Esophagus muscularis mucosa (tissue), 4 donors: ENCODE measurements at regions of chr11 and their contacts with region 1.

Region 1: DNA sequence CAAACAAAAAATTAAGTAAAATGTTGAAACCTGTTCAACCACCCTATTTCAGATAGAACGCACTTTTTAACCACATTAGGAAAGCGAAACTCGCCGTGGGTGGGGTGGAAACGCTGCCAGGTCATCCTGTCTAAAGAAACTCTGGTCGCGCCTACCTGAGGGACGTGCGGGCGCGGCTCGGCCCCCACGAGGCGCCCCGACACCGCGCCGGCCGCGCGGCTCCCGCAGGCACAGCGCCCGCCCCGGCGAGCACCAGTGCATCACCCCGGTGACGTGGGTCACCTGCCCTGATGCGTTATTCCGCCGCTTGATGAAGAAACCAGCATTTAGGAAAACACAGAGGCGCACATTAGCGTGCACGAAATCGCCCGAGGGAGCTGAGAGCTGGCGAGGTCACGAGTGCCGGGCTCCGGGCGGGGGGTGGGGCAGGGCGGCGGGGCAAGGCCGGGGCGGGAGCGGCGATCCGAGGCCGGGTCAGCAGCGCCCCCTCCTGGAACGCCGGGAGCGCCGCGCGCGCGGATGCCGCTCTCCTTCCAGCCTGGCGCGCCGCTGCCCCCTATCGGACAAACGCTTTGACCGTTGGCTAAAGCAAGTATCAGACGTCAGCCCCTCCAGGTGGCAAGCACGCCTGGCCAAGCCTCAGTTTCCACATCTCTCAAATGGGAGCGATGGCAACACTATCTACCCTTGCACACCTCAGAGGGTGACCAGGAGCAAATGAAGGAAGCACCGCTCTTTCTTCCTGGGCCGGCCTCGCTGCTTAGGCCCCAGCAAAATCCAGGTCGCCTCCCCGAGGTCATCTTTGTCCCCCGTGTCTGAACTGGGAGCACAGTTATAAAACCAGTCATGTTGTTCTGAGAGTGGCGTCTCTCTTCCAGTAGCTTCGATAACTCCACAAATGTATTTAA is 15.7 kb upstream of the SNX32 start:
- DNase-seq: peak; percentile 96
- H3K4me3 ChIP-seq: peak overlapping the region; percentile 62 to 81 (median 68)
- H3K27ac ChIP-seq: peak overlapping the region; percentile 78 to 81 (median 80)
- H3K4me1 ChIP-seq: peaks cover 4 to 24% (median 15%) of the 10 kb centered on the region in 4 donors
- H3K27me3 ChIP-seq: no peaks in the 10 kb centered on the region
- CTCF ChIP-seq: peak in 2 of 3 experiments; percentile 98 to 100
- EP300 ChIP-seq: no peak
- POLR2A ChIP-seq: no peak

Region 2: GRCh38 chr11:65625628-65626342 is 192.3 kb before region 1 on chr11:
- intact Hi-C with region 1: loop called (anchors 10 kb)
- DNase-seq: no peak
- H3K4me3 ChIP-seq: no peak overlapping the region
- H3K27ac ChIP-seq: no peak overlapping the region
- H3K4me1 ChIP-seq: peaks cover 0 to 8% (median 4%) of the 10 kb centered on the region in 4 donors
- H3K27me3 ChIP-seq: no peaks in the 10 kb centered on the region
- CTCF ChIP-seq: peak; percentile 51 to 70 (median 62)
- EP300 ChIP-seq: no peak
- POLR2A ChIP-seq: no peak

Region 3: DNA sequence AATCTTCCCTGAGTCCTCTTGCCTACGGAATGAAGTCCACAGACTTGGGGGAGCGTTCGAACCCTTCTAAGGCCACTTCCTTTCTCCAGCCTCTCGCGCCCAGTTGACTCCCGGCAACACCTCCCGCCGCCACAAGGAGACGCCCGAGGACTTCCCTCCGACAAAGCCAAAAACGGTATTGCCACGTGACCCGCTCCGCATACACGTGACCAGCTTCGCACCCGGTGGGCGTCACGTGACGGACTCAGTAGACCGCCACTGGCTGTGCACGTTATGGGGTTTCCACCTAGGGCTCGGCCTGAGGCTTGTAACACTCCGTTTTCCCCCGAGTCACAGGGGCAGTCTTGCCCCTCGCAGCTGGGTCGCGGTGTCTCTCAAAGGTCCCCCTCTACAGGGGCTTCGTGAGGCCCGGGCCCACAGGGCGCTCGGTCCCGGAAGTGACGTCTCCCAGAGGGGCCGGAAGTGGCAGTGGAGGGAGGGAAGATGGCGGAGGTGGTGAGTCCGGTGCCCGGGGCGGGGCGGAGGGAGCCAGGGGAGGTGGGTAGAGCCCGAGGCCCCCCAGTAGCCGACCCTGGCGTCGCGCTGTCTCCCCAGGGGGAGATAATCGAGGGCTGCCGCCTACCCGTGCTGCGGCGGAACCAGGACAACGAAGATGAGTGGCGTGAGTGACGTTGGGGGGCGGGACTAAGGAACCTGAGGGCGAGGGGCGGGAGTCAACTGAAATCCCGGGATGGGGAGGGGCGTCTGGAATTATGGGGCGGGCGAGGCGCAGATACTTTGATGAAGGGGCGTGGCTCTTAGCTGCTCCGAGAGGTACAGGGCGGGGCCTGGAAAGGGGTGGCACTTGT is 106.1 kb before region 1 on chr11 and contains the start of gene KAT5:
- intact Hi-C with region 1: loop called (anchors 2 kb)
- DNase-seq: peak; percentile 100
- H3K4me3 ChIP-seq: peak within 1 kb of the TSS; percentile 67 to 92 (median 72)
- H3K27ac ChIP-seq: peak within 1 kb of the TSS; percentile 95 to 99 (median 98)
- H3K4me1 ChIP-seq: peaks cover 21 to 45% (median 24%) of the 10 kb centered on the region in 4 donors
- H3K27me3 ChIP-seq: no peaks in the 10 kb centered on the region
- CTCF ChIP-seq: peak; percentile 97 to 99 (median 99)
- EP300 ChIP-seq: no peak
- POLR2A ChIP-seq: peak; percentile 89
- total RNA-seq, gene KAT5: 66.4 to 77.1 (median 68.3) TPM

Region 4: DNA sequence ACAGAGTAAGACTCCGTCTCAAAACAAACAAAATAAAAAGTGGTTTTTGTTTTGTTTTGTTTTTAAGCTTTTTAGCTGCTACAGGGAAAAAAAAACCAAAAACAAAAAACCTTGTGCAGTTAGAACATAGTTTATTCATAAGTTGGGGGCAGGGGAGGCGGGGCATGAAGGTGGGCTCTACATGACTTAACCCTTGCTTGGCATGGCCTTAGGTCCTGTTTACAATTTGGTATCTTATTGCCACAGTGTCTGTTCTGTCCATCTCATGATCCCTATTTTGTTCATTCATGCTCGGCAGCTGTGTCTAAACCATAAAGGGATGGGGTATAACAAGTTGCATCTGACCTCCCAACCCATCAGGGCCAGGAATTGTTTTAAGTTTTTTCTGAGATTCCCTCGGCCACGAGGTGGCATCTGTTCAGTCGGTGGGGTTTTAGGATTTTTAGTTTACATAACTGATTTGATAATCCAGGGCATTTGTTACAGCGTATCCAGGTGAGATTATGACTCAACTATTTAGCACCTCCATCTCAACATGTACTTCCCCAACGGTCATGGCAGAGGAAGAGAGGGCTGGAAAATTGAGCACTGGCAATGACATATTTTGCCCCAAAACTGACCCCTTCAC is 44.2 kb before region 1 on chr11:
- intact Hi-C with region 1: loop called (anchors 2 kb)
- DNase-seq: peak; percentile 31
- H3K4me3 ChIP-seq: no peak overlapping the region
- H3K27ac ChIP-seq: no peak overlapping the region
- H3K4me1 ChIP-seq: peaks cover 2 to 39% (median 25%) of the 10 kb centered on the region in 4 donors
- H3K27me3 ChIP-seq: no peaks in the 10 kb centered on the region
- CTCF ChIP-seq: no peak
- EP300 ChIP-seq: no peak
- POLR2A ChIP-seq: no peak

Region 5: DNA sequence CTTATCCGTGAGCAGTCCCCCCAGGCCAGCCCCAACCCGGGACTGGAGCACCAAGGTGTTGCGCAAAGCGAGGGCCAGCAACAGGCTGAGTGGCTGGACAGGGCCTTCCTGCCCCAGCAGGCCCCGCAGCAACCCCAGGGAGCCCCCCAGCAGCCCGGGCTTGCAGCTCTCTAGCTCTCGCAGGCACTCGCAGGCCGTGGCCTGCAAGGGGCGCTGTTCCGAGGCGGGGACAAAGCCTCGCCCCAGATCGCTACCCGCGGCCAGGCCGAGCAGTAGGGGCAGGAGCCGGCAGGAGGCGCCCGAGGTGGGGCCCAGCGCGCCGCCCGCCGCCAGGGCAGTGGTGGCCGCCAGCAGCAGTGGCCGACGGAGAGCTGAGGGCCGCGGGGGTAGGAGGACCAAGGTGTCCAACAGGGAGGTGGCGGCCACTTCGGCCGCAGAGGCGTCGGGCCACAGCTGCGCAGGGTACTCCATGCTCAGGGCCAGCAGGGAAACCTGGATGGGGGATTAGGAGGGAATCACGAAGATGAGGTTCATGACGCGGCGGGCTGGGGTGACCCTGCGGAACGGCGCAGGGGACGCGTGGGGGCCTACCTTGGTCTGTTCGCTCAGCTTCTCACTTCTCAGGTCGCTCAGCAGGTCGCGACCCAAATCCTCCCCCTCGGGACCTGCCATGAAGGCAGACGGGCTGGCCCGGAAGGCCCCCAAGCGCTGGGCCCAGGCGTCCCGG is 38.1 kb before region 1 on chr11:
- intact Hi-C with region 1: loop called (anchors 2 kb)
- DNase-seq: peak; percentile 94
- H3K4me3 ChIP-seq: peak overlapping the region; percentile 73 to 99 (median 92)
- H3K27ac ChIP-seq: peak overlapping the region; percentile 79 to 85 (median 81)
- H3K4me1 ChIP-seq: peaks cover 12 to 46% (median 45%) of the 10 kb centered on the region in 4 donors
- H3K27me3 ChIP-seq: peaks cover 0 to 9% (median 0%) of the 10 kb centered on the region in 4 donors
- CTCF ChIP-seq: peak; percentile 87 to 99 (median 95)
- EP300 ChIP-seq: no peak
- POLR2A ChIP-seq: no peak